CD4-positive, alpha-beta memory T cell (primary cell): ENCODE measurements at regions of chr19 and their contacts with region 1.

Region 1: DNA sequence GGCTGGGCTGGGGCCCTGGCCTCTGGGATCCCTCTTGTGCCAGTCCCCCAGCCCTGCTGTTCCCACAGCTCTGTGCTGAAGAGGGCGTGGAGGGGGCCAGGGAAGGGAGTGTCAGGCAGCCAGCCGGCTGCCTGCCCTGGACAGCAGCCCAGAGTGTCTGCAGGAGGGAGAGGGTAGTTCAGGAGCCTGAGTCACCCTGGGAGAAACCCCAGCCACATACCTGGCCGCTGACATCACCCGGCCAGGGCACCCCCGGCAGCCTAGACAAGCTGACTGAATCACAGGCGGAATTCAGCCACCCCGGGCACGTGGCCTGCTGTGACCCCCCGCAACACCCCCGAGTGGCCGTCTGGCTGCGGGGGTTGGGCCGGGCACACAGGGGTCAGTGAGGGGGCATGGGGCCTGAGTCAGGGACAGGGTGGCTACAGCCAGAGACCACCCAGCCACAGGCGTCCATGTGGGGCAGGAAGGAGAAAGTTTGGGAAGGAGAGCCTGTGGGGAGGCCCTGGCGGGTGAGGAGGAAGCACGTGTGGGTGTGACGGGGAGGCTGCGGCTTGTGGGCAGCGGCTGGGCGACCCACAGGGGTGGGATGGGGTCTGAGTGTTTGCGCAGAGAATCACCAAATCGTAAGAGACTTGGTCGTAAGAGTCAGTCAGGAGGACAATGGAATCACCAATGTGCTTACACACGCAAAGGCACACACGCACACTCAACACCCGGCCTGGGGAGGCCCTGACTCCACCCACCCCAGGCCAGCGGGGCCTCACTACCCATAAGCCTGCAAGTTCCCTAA is 11.9 kb upstream of the FOSB start:
- DNase-seq: peak; percentile 51 to 91 (median 54)
- H3K4me3 ChIP-seq: no peak overlapping the region
- H3K4me3 Mint-ChIP-seq: peak overlapping the region; percentile 54 to 81 (median 63)
- H3K27ac ChIP-seq: peak overlapping the region; percentile 20
- H3K27ac Mint-ChIP-seq: peak overlapping the region; percentile 75 to 95 (median 86)
- H3K4me1 ChIP-seq: peaks cover 30% of the 10 kb centered on the region
- H3K4me1 Mint-ChIP-seq: peaks cover 20 to 48% (median 27%) of the 10 kb centered on the region in 4 donors
- H3K27me3 ChIP-seq: no peaks in the 10 kb centered on the region
- H3K27me3 Mint-ChIP-seq: peaks cover 0 to 4% of the 10 kb centered on the region in 2 donors

Region 2: GRCh38 chr19:44903602-44904425 is 552.1 kb before region 1 on chr19:
- CTCF ChIA-PET with region 1: no interaction called
- POLR2A ChIA-PET with region 1: no interaction called
- intact Hi-C with region 1: no loop called
- DNase-seq: peak; percentile 61 to 70 (median 63)
- H3K4me3 ChIP-seq: no peak overlapping the region
- H3K4me3 Mint-ChIP-seq: no peak overlapping the region
- H3K27ac ChIP-seq: no peak overlapping the region
- H3K27ac Mint-ChIP-seq: peak overlapping the region in 2 of 7 donors; percentile 19 to 60
- H3K4me1 ChIP-seq: no peaks in the 10 kb centered on the region
- H3K4me1 Mint-ChIP-seq: peaks cover 7 to 9% (median 8%) of the 10 kb centered on the region in 4 donors
- H3K27me3 ChIP-seq: peaks cover 12% of the 10 kb centered on the region
- H3K27me3 Mint-ChIP-seq: peaks cover 17% of the 10 kb centered on the region in 2 donors

Region 3: GRCh38 chr19:45469132-45469944 is 13.4 kb after region 1 on chr19:
- CTCF ChIA-PET with region 1: interaction called, 6 read pairs
- POLR2A ChIA-PET with region 1: interaction called, 240 read pairs
- intact Hi-C with region 1: loop called (anchors 1 kb)
- DNase-seq: peak; percentile 92 to 97 (median 96)
- H3K4me3 ChIP-seq: peak overlapping the region; percentile 93 to 100
- H3K4me3 Mint-ChIP-seq: peak overlapping the region; percentile 93 to 96 (median 95)
- H3K27ac ChIP-seq: peak overlapping the region; percentile 98
- H3K27ac Mint-ChIP-seq: peak overlapping the region; percentile 99 to 100 (median 99)
- H3K4me1 ChIP-seq: peaks cover 27% of the 10 kb centered on the region
- H3K4me1 Mint-ChIP-seq: peaks cover 9 to 73% (median 21%) of the 10 kb centered on the region in 4 donors
- H3K27me3 ChIP-seq: no peaks in the 10 kb centered on the region
- H3K27me3 Mint-ChIP-seq: peaks cover 2 to 3% of the 10 kb centered on the region in 2 donors